ENCODE measurements at regions of chr19 and their contacts with region 1.

Region 1: DNA sequence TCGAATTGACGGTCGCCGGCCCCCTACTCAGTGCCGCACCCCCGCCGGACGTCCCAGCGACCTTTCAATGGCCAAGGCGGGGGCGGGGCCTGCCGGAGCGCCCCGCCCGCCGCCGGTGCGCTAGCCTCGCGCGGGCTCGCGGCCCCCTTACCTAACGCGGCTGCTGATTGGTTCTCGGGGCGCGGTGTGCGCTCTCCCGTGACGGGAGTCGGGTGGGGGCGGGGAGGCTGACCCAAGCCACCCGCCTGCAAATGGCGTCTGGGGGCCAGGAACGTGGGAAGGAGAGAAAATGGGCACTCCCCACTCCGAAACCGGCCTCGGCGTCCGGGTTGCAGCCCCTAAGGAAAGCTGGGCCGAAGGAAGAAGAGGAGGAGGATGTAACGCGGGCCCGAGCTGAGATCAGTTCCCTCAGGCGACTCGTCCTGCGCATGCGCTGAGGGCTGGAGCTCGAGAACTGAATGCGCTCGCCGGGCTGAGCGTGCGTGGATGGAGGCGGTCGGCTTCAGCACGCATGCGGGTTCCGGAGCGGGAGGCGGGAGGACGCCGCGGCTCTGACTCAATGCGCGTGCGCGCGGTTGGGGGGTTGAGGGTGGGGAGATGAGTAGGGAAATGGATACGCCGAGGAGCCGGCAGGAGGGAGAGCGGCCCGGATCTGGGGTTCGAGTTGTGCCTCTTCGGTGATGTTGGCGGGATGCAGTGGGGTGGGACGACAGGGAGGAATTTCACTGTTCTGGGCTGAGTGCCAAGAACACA is at the start of gene SMG9:
- DNase-seq: peak; percentile 97 to 100 (median 99)
- ATAC-seq: peak; percentile 84 to 87
- H3K4me3 Mint-ChIP-seq: peak within 1 kb of the TSS; percentile 91 to 99 (median 96)
- H3K27ac Mint-ChIP-seq: peak within 1 kb of the TSS; percentile 91 to 99 (median 99)
- H3K4me1 Mint-ChIP-seq: peaks cover 17 to 51% (median 40%) of the 10 kb centered on the region in 4 donors
- H3K27me3 Mint-ChIP-seq: peaks cover 0 to 4% (median 0%) of the 10 kb centered on the region in 5 donors
- polyA plus RNA-seq, gene SMG9: 3.4 to 8.3 (median 8.3) TPM

Region 2: DNA sequence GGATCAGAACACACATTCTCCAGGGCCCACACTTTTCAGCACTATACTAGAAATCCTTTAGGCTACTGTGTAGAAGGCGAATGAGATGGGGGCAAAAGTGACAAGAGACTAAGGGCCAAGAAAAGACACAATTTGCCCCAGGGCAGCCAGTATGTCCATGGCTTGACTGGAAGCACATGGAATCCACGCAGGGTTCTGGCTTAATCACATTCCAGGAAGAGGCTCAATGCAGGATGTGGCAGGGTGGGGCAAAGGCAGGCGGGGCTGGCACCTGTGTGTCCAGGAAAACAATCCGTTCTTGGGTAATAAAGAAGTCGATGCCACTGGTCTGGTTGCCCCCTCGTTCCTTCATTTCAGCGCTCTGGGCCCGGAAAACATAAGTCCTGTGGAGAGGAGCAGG is 14.8 kb before region 1 on chr19:
- POLR2A ChIA-PET with region 1: no interaction called
- DNase-seq: peak in 1 of 10 donors; percentile 45
- ATAC-seq: no peak
- H3K4me3 Mint-ChIP-seq: no peak overlapping the region
- H3K27ac Mint-ChIP-seq: peak overlapping the region in 2 of 10 donors; percentile 28 to 35
- H3K4me1 Mint-ChIP-seq: peaks cover 0 to 9% (median 3%) of the 10 kb centered on the region in 4 donors
- H3K27me3 Mint-ChIP-seq: no peaks in the 10 kb centered on the region

Region 3: GRCh38 chr19:43765109-43765876 is 10.6 kb after region 1 on chr19:
- POLR2A ChIA-PET with region 1: interaction called, 29 read pairs
- DNase-seq: peak in 4 of 10 donors; percentile 30 to 67 (median 40)
- ATAC-seq: peak; percentile 75 to 83
- H3K4me3 Mint-ChIP-seq: peak overlapping the region; percentile 16 to 75 (median 53)
- H3K27ac Mint-ChIP-seq: peak overlapping the region; percentile 82 to 95 (median 90)
- H3K4me1 Mint-ChIP-seq: peaks cover 24 to 47% (median 35%) of the 10 kb centered on the region in 4 donors
- H3K27me3 Mint-ChIP-seq: no peaks in the 10 kb centered on the region

Region 4: DNA sequence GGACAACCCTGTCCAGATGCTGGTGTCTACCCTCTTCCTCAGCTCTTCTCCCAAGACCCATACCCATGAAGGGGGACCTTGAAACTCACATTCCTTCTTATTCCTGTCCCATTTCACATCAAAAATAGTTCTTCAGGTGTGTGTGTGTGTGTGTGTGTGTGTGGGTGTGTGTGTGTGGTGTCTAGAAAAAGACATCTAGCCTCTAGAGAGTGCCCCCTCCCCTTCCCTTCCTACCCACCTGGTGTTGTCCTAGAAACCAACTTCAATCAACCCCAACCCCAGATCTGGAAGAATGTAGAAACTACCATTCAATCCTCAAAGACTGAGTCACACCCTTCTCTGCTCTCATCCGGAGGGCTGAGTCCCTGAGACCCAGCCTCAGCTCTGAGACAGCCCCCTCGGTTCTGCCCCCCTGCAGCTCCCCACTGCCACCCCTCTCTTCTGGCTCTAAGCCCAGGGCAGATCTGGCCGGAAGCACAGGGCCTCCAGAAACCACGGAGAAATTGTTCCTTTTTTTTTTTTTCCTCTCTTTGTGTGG is 22.6 kb after region 1 on chr19:
- POLR2A ChIA-PET with region 1: interaction called, 30 read pairs
- DNase-seq: peak in 9 of 10 donors; percentile 27 to 83 (median 53)
- ATAC-seq: peak; percentile 77 to 78
- H3K4me3 Mint-ChIP-seq: peak overlapping the region; percentile 62 to 94 (median 86)
- H3K27ac Mint-ChIP-seq: peak overlapping the region; percentile 88 to 99 (median 94)
- H3K4me1 Mint-ChIP-seq: peaks cover 35 to 73% (median 64%) of the 10 kb centered on the region in 4 donors
- H3K27me3 Mint-ChIP-seq: peaks cover 0 to 6% (median 0%) of the 10 kb centered on the region in 5 donors

Region 5: DNA sequence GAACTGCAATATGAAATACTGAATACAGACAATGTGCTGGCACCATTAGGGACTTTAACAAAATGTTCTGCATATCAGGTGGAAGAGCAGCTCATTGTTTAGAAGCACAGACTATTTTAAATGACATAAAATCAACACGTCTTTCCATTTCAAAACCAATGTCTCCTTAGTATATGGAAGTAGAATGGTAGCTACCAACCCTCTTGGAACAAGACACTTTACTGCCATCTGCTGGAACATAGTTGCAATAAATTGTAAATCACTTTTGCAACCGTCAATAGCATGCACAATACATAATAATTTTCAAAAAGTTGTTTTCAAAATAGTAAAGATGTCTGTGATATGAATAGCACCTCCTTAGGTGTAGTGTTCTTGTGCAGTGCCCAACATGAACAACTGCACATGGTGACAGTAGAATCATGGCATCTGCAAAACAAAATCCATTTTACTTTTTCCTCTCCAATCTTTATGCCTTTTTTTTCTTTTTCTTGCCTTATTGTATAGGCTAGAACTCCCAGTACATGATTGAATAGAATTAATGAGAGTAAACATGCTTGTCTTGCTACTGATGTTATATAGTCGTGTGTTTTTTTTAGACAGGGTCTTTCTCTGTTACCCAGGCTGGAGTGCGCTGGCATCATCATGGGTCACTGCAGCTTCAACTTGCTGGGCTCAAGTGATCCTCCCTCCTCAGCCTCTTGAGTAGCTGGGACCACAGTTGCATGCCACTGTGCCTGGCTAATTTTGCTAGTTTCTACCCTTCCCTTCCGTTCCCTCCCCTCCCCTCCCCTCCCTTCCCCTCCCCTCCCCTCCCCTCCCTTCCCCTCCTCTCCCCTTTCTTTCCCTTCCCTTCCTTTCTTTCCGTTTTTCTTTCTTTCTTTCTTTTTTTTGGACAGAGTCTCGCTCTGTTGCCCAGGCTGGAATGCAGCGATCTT is 55.4 kb after region 1 on chr19:
- POLR2A ChIA-PET with region 1: no interaction called
- DNase-seq: peak in 3 of 10 donors; percentile 36 to 54 (median 50)
- ATAC-seq: peak; percentile 68 to 72
- H3K4me3 Mint-ChIP-seq: no peak overlapping the region
- H3K27ac Mint-ChIP-seq: no peak overlapping the region
- H3K4me1 Mint-ChIP-seq: peaks cover 0 to 1% (median 0%) of the 10 kb centered on the region in 4 donors
- H3K27me3 Mint-ChIP-seq: peaks cover 9 to 44% (median 19%) of the 10 kb centered on the region in 5 donors

Region 6: GRCh38 chr19:43966079-43966694 is 211.5 kb after region 1 on chr19:
- POLR2A ChIA-PET with region 1: no interaction called
- DNase-seq: no peak
- ATAC-seq: no peak
- H3K4me3 Mint-ChIP-seq: no peak overlapping the region
- H3K27ac Mint-ChIP-seq: no peak overlapping the region
- H3K4me1 Mint-ChIP-seq: no peaks in the 10 kb centered on the region
- H3K27me3 Mint-ChIP-seq: peaks cover 0 to 2% (median 0%) of the 10 kb centered on the region in 5 donors